CD8-positive, alpha-beta T cell (primary cell): ENCODE measurements at regions of chr13 and their contacts with region 1.

Region 1: GRCh38 chr13:99386911-99387788 is 80.0 kb upstream of the GPR183 start:
- DNase-seq: peak; percentile 77 to 95 (median 87)
- ATAC-seq: peak; percentile 21
- H3K4me3 ChIP-seq: no peak overlapping the region
- H3K4me3 Mint-ChIP-seq: peak overlapping the region; percentile 27
- H3K27ac ChIP-seq: peak overlapping the region in 1 of 2 experiments; percentile 51
- H3K27ac Mint-ChIP-seq: peak overlapping the region; percentile 98
- H3K4me1 ChIP-seq: peaks cover 65% of the 10 kb centered on the region
- H3K4me1 Mint-ChIP-seq: peaks cover 71% of the 10 kb centered on the region
- H3K27me3 ChIP-seq: no peaks in the 10 kb centered on the region
- H3K27me3 Mint-ChIP-seq: no peaks in the 10 kb centered on the region
- CTCF ChIP-seq: peak; percentile 95

Region 2: DNA sequence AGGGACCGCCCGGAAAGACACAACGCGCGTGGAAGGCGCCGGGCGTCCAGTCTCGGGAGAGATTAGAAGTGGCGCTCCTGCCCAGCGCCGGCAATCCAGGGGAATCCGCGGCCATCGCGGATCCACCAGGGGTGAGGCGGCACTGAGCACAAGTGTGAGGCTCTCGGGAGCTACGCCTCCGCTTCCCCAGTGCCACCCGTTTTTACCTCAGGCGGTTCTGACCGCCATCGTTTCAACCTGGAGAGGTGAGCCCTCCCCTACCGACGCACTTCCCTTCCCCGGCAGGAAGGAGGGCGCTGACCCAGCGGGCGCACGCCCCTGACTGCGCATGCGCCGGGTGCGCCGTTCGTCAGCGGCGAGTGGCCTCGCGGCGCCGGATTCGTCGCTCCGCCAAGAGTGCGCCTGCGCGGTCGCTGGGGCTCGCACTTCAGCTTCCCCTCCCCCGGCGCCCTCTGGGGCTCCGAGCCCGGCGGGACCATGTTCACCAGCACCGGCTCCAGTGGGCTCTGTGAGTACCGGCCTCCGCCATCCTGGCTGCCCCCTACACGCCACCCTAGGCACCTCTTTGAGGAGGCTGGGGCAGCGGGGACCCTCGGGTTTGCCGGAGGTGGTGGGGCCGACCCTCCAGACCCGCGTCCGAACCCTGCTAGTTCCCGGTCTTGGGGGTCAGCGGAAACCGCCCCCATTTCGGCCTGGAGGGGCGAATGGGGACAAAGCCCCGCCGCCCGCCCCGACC is 186.6 kb before region 1 on chr13 and contains the start of gene UBAC2:
- CTCF ChIA-PET with region 1: interaction called, 3 read pairs
- POLR2A ChIA-PET with region 1: interaction called, 4 read pairs
- intact Hi-C with region 1: loop called in 1 of 2 experiments (anchors 1 kb)
- DNase-seq: peak; percentile 93 to 99 (median 97)
- ATAC-seq: peak; percentile 77
- H3K4me3 ChIP-seq: peak within 1 kb of the TSS; percentile 77 to 90
- H3K4me3 Mint-ChIP-seq: peak within 1 kb of the TSS; percentile 90
- H3K27ac ChIP-seq: peak within 1 kb of the TSS; percentile 98 to 99
- H3K27ac Mint-ChIP-seq: peak within 1 kb of the TSS; percentile 94
- H3K4me1 ChIP-seq: peaks cover 53% of the 10 kb centered on the region
- H3K4me1 Mint-ChIP-seq: peaks cover 69% of the 10 kb centered on the region
- H3K27me3 ChIP-seq: no peaks in the 10 kb centered on the region
- H3K27me3 Mint-ChIP-seq: no peaks in the 10 kb centered on the region
- CTCF ChIP-seq: no peak
- total RNA-seq, gene UBAC2: 62.0 to 63.0 TPM

Region 3: DNA sequence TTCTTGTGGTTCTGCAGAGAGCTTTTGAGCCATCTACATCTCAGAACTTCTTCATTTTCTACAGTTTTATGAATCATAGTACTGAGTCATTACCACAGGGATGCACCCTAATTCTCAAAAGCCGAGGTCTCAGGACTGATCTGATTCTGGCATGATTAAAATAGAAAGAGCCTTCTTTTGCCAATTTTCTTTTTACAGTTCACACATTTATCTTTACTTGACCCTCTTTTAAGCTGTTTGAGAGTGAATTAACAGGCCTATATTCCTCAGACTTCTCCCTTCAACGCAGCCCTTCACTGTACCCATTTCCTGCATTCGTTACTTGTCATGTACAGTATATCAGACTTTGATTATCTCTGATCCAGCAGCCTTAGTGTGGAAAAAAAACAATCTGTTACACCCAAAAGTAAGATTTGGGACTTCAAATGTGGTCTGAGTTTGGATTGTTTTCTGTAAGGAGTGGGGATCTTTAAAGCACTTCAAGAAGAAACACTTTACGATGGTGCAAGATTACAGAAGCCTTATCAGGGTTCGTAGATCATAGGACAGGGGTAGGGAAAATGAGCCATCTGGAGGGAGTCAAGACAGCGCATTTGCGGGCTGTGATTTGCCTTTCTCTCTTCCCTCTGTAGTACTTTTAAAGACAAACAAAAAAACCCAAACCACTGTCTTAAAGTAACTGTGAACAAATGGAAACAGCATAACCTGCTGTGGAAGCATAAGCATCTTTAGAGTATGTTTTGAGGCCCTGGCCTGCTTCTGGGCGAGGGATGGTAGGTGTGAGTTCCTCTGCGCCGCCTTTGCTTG is 64.7 kb before region 1 on chr13:
- CTCF ChIA-PET with region 1: interaction called, 10 read pairs
- POLR2A ChIA-PET with region 1: no interaction called
- intact Hi-C with region 1: loop called in 1 of 2 experiments (anchors 2 kb)
- DNase-seq: peak in 5 of 9 experiments; percentile 40 to 81 (median 46)
- ATAC-seq: peak; percentile 80
- H3K4me3 ChIP-seq: peak overlapping the region in 1 of 2 experiments; percentile 6
- H3K4me3 Mint-ChIP-seq: peak overlapping the region; percentile 57
- H3K27ac ChIP-seq: peak overlapping the region; percentile 22 to 56
- H3K27ac Mint-ChIP-seq: peak overlapping the region; percentile 92
- H3K4me1 ChIP-seq: peaks cover 56% of the 10 kb centered on the region
- H3K4me1 Mint-ChIP-seq: peaks cover 73% of the 10 kb centered on the region
- H3K27me3 ChIP-seq: no peaks in the 10 kb centered on the region
- H3K27me3 Mint-ChIP-seq: no peaks in the 10 kb centered on the region
- CTCF ChIP-seq: no peak

Region 4: DNA sequence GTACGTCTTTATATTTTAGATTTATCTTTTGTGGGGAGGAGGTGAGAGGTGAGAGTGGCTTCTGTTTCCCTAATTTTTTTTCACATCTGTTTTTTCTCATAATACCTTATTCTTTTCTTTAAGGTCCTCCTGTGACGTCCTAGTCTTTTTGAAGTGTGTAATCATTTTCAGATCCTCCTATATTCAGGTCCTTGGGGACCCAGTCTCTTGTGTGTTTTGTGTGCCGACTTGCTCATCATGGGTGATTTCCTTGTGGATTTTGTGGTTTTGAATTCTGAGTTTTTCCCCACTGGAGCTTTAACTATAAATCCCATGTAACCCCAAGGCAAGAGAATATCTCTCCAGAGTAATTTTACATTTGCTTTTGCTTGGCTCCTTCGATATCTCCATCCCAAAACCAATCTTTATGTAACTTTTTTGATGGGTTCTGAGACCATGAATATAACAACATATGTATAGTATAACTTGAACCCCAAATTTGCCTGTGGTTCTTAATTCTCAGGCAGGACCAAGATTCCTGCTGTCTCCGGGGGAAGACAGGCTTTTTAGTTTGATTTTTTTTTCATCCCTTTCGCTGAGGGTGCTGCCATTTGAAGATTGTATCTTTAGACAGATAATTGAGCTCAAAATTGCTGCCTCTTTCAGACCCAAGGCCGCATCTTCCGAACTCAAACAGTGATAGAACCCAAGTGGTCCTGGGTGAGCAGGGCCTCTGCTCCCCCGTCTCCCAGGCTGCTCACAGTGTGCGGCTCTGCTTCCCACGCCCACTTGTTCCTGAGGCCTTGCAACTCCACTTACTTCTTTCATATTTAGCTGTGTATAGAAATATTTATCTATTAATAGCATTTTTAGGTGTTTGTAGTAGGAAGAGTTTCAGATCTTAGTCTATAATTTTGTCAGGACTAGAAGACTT is 20.8 kb before region 1 on chr13:
- CTCF ChIA-PET with region 1: interaction called, 24 read pairs
- POLR2A ChIA-PET with region 1: interaction called, 51 read pairs
- intact Hi-C with region 1: loop called in 1 of 2 experiments (anchors 1 kb)
- DNase-seq: peak in 4 of 9 experiments; percentile 10 to 53 (median 28)
- ATAC-seq: no peak
- H3K4me3 ChIP-seq: no peak overlapping the region
- H3K4me3 Mint-ChIP-seq: peak overlapping the region; percentile 53
- H3K27ac ChIP-seq: peak overlapping the region; percentile 24 to 61
- H3K27ac Mint-ChIP-seq: peak overlapping the region; percentile 97
- H3K4me1 ChIP-seq: peaks cover 78% of the 10 kb centered on the region
- H3K4me1 Mint-ChIP-seq: peaks cover 88% of the 10 kb centered on the region
- H3K27me3 ChIP-seq: no peaks in the 10 kb centered on the region
- H3K27me3 Mint-ChIP-seq: no peaks in the 10 kb centered on the region
- CTCF ChIP-seq: no peak

Region 5: DNA sequence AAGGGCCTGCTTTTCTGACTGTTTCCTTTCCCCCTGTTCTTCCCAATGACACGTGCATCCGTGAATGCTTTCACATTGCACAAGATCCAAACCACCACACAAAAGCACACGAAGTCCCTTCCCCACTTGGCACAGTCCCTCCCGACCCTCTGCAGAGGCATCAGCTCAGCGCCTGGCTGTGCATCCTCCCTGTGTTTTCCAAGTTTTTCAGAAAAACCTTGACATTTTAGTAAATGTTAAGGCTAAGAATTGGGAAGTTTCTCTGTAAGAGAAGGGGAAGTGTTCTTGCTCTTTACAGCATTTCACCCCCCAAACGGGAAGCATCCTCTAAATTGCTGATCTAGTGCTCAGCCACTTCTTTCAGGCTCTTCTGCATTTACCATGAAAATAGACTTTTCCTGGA is 19.6 kb after region 1 on chr13:
- CTCF ChIA-PET with region 1: interaction called, 21 read pairs
- POLR2A ChIA-PET with region 1: no interaction called
- intact Hi-C with region 1: no loop called
- DNase-seq: no peak
- ATAC-seq: no peak
- H3K4me3 ChIP-seq: no peak overlapping the region
- H3K4me3 Mint-ChIP-seq: no peak overlapping the region
- H3K27ac ChIP-seq: no peak overlapping the region
- H3K27ac Mint-ChIP-seq: peak overlapping the region; percentile 58
- H3K4me1 ChIP-seq: peaks cover 8% of the 10 kb centered on the region
- H3K4me1 Mint-ChIP-seq: peaks cover 37% of the 10 kb centered on the region
- H3K27me3 ChIP-seq: no peaks in the 10 kb centered on the region
- H3K27me3 Mint-ChIP-seq: no peaks in the 10 kb centered on the region
- CTCF ChIP-seq: no peak

Region 6: DNA sequence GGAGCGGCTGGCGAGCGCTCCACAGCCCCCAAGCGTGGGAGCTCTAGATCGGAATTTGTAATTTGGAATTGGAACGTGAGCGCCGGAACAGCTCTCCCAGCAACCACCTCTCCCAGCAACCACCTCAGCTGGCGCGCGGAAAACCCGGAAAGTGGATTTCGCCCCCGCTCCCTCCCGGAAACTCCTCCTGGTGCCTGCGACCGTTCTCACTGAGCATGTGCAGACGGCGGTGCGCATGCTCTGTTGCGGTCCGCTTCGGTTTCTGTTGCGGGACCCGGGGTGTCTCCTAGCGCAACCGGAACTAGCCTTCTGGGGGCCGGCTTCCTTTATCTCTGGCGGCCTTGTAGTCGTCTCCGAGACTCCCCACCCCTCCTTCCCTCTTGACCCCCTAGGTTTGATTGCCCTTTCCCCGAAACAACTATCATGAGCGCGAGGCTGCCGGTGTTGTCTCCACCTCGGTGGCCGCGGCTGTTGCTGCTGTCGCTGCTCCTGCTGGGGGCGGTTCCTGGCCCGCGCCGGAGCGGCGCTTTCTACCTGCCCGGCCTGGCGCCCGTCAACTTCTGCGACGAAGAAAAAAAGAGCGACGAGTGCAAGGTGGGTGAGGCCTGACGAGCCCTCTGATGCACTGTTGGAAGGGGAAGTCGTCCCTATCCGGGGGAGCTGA is 114.2 kb after region 1 on chr13 and contains the start of gene TM9SF2:
- CTCF ChIA-PET with region 1: no interaction called
- POLR2A ChIA-PET with region 1: no interaction called
- intact Hi-C with region 1: loop called in 1 of 2 experiments (anchors 5 kb)
- DNase-seq: peak; percentile 92 to 99 (median 97)
- ATAC-seq: peak; percentile 59
- H3K4me3 ChIP-seq: peak within 1 kb of the TSS; percentile 83 to 91
- H3K4me3 Mint-ChIP-seq: peak within 1 kb of the TSS; percentile 99
- H3K27ac ChIP-seq: peak within 1 kb of the TSS; percentile 86 to 88
- H3K27ac Mint-ChIP-seq: peak within 1 kb of the TSS; percentile 98
- H3K4me1 ChIP-seq: peaks cover 66% of the 10 kb centered on the region
- H3K4me1 Mint-ChIP-seq: peaks cover 81% of the 10 kb centered on the region
- H3K27me3 ChIP-seq: no peaks in the 10 kb centered on the region
- H3K27me3 Mint-ChIP-seq: no peaks in the 10 kb centered on the region
- CTCF ChIP-seq: no peak
- total RNA-seq, gene TM9SF2: 42.7 to 47.5 TPM